Head of caudate nucleus (tissue), 42 donors: ENCODE measurements at regions of chr10 and their contacts with region 1.

Region 1: DNA sequence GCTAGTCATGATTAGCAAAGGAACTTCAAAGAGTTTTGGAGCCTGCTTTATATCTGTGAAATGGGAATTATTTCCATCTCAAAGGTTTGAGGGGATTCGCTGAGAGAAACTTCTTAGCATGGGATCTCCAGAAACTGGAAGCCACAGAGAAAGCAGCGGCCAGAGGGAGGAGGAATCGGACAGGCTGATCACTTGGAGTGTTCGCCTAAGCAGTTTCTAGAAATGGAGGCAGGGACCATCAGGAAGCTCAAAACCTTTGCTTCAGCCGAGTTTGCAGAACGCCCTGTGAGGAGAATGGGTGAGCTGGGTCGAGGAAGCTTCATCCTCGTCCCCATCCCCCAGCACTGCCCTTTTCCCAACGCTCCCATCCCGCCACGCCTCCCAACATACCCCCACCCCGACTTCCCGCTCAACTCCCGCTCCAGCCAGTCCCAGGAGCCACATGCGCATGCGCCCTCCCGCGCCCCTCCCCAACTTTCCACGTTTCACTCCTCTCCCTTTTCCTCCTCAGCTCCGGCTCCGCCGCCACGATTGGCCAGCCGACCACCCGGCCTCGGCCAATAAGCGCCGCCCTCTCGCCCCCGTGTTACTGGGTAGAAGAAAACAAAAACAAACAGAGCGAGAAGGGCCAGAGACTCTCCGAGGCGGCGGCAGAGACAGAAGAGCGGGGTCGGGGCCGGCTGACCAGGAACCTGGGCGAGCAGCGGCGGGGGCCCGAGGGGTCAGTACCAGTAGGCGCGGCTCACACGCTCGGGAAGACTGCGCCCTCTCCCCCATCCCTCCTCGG is at the start of gene PDCD4:
- DNase-seq: peak; percentile 98 to 100 (median 100)

Region 2: DNA sequence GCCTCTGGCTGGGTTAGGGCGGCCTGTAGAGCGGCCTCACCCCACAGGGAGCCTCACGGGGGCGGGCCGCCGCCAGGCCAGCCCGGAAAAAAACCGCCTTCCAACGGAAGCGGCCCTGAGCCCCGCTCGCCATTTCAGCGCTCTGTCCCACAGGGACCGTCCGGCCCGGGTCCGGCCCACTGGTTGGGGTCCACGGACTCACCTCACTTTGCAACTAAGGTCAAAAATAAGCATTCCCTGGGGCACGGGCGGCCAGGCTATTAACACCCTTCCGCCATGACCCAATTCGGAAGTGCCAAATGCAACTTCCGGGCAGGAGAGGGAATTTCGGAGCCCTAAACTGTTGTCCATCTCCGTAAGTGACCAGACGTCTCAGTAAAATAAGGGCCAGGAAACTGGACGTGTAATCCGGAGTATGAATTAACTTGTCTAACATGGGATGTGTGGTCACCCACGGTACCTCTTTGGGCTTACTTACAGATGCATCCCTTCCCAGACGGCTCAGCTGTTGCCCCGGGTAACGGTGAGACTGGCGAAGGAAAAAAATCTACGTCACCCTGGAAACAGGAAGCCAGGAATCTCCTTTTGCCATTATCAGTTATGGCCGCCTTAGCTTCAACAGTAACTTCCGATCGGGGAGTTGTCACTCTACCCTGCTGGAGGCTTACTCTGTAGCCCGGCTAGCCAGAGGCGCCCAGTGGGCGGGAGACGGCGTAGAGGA is 47.3 kb after region 1 on chr10 and contains the start of gene BBIP1:
- intact Hi-C with region 1: loop called (anchors 2 kb)
- DNase-seq: peak in 8 of 42 donors; percentile 60 to 100 (median 84)

Region 3: GRCh38 chr10:111175787-111176186 is 304.3 kb after region 1 on chr10:
- intact Hi-C with region 1: no loop called
- DNase-seq: no peak